HepG2 (cell line): ENCODE measurements at regions of chr17 and their contacts with region 1.

Region 1: DNA sequence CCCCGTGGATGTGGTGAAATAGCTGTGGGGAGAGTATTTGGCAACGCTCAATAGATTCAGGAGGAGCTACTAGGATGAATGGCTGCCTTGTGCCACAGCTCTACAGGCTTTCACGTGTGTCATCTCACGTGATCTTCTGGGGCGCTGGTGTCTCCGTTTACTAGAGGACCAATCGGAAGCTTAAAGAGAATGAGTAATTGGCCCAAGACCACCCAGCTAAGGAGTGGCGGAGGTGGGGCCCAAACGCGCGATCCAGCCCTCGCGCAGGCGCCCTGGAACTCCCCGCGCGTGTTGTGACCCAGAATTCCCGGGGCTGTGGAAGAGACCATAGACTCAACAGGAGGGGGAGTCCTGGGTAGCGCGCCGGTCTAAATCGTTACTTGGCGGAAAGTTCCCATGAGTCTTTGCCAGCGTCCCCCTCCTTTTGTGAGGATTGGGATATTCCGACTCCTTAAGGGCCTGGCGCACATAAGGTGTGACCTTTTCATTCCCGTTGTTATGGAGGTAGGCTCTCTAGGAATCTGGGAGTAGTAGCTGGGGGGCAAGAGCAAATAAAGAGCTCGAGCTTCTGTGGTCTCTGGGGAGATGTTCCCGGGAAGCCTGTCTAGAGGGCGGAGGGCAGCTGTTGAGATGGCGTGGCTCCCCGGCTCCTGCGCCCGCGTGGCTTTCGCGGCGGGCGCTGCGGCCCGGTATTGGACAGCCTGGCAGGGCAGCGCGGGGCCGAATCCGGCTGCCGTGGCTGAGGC is 23.4 kb downstream of the TRPV2 start:
- DNase-seq: peak; percentile 100
- ATAC-seq: peak; percentile 77
- H3K4me3 ChIP-seq: peak overlapping the region; percentile 91 to 94 (median 93)
- H3K27ac ChIP-seq: peak overlapping the region; percentile 93
- H3K4me1 ChIP-seq: peaks cover 78% of the 10 kb centered on the region
- H3K27me3 ChIP-seq: no peaks in the 10 kb centered on the region; a peak in 1 of 5 replicates
- CTCF ChIP-seq: no peak
- EP300 ChIP-seq: peak; percentile 46 to 52; a peak in 3 of 4 replicates
- POLR2A ChIP-seq: peak; percentile 93 to 99
- RAD21 ChIP-seq: no peak

Region 2: DNA sequence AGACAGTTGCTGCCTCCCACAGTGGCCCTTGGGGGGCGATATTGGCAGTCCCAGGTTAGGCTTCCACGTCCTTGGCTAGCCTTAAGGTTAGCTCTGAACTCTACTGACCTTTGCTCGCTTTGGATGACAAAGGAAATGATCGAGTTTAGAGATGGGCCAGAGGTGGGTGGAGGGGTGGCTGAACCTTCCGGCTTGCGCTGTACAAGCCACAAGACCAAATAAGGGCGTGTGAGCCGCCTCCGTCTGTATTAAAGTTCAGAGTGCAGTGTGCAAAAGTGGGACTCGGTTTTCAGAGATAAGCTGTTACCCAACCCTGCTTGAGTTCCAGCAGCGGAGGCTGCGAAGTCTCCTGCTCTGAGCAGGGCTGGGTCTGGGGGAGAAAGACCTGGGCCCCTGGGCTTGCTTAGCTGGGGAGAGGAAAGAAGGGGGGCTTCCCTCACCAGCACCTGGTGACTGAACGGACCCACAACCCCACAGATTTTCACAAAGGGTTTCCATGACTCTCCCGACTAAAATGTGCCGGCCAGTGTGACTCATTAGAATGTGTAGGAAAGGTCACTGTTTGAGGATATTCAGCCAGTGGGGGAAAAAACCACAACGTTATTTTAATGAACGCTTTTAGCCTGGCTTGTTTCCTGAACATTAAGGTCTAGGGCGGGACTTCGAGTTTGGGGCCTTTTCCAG is 152.6 kb before region 1 on chr17:
- CTCF ChIA-PET with region 1: no interaction called
- POLR2A ChIA-PET with region 1: interaction called, 17 read pairs
- in situ Hi-C with region 1: no loop called
- intact Hi-C with region 1: no loop called
- DNase-seq: peak; percentile 99
- ATAC-seq: peak; percentile 95
- H3K4me3 ChIP-seq: peak overlapping the region in 2 of 3 experiments; percentile 34 to 45; a peak in 5 of 6 replicates
- H3K27ac ChIP-seq: peak overlapping the region; percentile 95
- H3K4me1 ChIP-seq: peaks cover 79% of the 10 kb centered on the region
- H3K27me3 ChIP-seq: no peaks in the 10 kb centered on the region; a peak in 1 of 5 replicates
- CTCF ChIP-seq: peak; percentile 99
- EP300 ChIP-seq: peak; percentile 55 to 76; a peak in 3 of 4 replicates
- POLR2A ChIP-seq: peak; percentile 81 to 88
- RAD21 ChIP-seq: peak; percentile 95

Region 3: DNA sequence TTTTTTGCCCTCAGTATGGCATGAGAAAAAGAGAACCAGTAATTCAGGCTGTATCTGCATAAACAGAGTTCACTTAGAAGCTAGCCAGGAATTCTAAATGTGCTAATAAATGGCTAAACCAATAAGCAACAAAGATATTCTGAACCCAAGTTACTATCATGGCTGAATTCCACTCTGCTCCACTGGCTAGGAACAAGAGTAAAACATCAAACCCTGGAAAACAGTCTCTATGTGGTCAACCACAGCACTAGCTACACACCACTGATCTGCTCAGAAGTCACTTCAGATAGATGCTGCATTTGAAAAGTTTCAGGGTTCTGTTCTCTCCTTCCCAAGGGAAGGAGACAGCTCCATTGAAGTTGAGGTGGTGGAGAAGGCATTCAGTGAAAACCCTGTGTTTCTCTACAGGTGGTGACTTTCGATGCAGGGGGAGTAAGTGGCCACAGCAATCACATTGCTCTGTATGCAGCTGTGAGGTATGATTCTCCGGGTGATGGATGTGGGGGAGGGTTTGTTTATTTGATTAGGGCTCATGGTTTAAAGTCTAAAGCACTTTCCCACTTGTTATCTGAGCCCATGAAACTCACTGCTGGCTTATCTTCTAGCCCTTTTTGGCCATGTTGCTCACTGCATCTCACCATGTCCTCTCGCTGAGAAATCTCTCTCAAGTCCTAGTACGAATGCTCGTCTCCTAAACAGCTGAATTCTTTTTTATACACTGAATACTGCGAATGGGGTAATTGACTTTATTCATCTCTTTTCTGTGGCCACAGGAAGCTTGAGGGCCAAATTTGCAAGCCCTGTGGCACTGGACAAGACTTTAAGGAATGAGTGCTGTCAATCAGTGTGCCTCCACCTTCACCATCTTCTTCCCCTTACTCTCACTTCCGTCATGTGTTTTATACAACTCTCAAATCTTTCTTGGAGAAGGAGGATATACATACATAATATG is 125.3 kb before region 1 on chr17:
- CTCF ChIA-PET with region 1: no interaction called
- POLR2A ChIA-PET with region 1: interaction called, 11 read pairs
- in situ Hi-C with region 1: no loop called
- intact Hi-C with region 1: no loop called
- DNase-seq: peak; percentile 94
- ATAC-seq: peak; percentile 97
- H3K4me3 ChIP-seq: peak overlapping the region in 2 of 3 experiments; percentile 1 to 35; a peak in 2 of 6 replicates
- H3K27ac ChIP-seq: peak overlapping the region; percentile 97
- H3K4me1 ChIP-seq: peaks cover 55% of the 10 kb centered on the region
- H3K27me3 ChIP-seq: no peaks in the 10 kb centered on the region
- CTCF ChIP-seq: peak; percentile 11; the same call in 1 of the 2 replicates
- EP300 ChIP-seq: peak in 1 of 2 experiments; percentile 76; a peak in 3 of 4 replicates
- POLR2A ChIP-seq: peak; percentile 44 to 55; a peak in 2 of 4 replicates
- RAD21 ChIP-seq: 0 out of 2 replicates have a peak, but pooled peaks have one; percentile 41

Region 4: GRCh38 chr17:16363749-16364536 is 74.8 kb before region 1 on chr17:
- CTCF ChIA-PET with region 1: no interaction called
- POLR2A ChIA-PET with region 1: interaction called, 10 read pairs
- in situ Hi-C with region 1: no loop called
- intact Hi-C with region 1: no loop called
- DNase-seq: peak; percentile 66
- ATAC-seq: peak; percentile 93
- H3K4me3 ChIP-seq: no peak overlapping the region
- H3K27ac ChIP-seq: no peak overlapping the region
- H3K4me1 ChIP-seq: peaks cover 38% of the 10 kb centered on the region
- H3K27me3 ChIP-seq: no peaks in the 10 kb centered on the region
- CTCF ChIP-seq: peak; percentile 86
- EP300 ChIP-seq: no peak
- POLR2A ChIP-seq: no peak
- RAD21 ChIP-seq: peak; percentile 74

Region 5: GRCh38 chr17:16407911-16408588 is 30.7 kb before region 1 on chr17:
- CTCF ChIA-PET with region 1: no interaction called
- POLR2A ChIA-PET with region 1: interaction called, 12 read pairs
- in situ Hi-C with region 1: no loop called
- intact Hi-C with region 1: no loop called
- DNase-seq: peak; percentile 51
- ATAC-seq: peak; percentile 82
- H3K4me3 ChIP-seq: peak overlapping the region; percentile 19 to 58 (median 36); a peak in 5 of 6 replicates
- H3K27ac ChIP-seq: peak overlapping the region; percentile 12
- H3K4me1 ChIP-seq: peaks cover 25% of the 10 kb centered on the region
- H3K27me3 ChIP-seq: no peaks in the 10 kb centered on the region
- CTCF ChIP-seq: no peak
- EP300 ChIP-seq: no peak
- POLR2A ChIP-seq: no peak
- RAD21 ChIP-seq: no peak

Region 6: GRCh38 chr17:16428098-16428882 is 10.4 kb before region 1 on chr17:
- CTCF ChIA-PET with region 1: no interaction called
- POLR2A ChIA-PET with region 1: interaction called, 159 read pairs
- in situ Hi-C with region 1: no loop called
- intact Hi-C with region 1: no loop called
- DNase-seq: peak; percentile 64
- ATAC-seq: peak; percentile 87
- H3K4me3 ChIP-seq: no peak overlapping the region
- H3K27ac ChIP-seq: no peak overlapping the region
- H3K4me1 ChIP-seq: peaks cover 37% of the 10 kb centered on the region
- H3K27me3 ChIP-seq: no peaks in the 10 kb centered on the region
- CTCF ChIP-seq: peak; percentile 88
- EP300 ChIP-seq: no peak
- POLR2A ChIP-seq: no peak
- RAD21 ChIP-seq: peak; percentile 57; the same call in 1 of the 2 replicates

Region 7: DNA sequence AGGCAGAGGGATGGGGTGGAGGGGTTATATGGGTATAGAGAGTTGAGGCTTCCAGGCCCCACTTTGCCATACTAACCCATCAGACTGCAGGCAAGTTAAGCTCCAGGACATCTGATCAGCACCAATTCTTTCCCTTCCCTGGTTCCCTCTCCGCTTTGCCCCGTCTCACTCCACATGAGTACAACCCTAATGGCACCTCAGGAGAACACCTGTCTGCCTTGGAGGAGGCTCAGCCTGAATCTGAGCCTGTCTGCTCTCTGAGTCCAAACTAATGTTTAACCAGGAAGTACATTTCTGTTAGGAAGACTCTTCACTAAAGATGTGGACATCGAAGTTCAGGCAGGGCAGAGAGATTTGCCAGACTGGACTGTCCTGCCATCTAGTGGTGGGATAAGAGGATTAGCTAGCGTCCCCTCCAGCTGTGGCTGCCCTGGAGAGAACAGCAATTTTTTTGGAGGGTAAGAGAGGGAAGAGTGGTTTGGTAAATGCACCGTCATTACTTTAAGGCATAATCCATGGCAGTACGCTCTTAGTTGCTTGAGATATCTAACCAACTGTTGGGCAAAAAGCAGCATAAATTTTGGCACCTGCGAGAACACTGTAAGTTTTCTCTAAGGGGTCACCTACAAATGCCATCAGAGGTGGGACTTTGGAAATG is 82.5 kb after region 1 on chr17:
- CTCF ChIA-PET with region 1: no interaction called
- POLR2A ChIA-PET with region 1: interaction called, 13 read pairs
- in situ Hi-C with region 1: no loop called
- intact Hi-C with region 1: no loop called
- DNase-seq: peak; percentile 87
- ATAC-seq: peak; percentile 98
- H3K4me3 ChIP-seq: no peak overlapping the region
- H3K27ac ChIP-seq: no peak overlapping the region
- H3K4me1 ChIP-seq: peaks cover 22% of the 10 kb centered on the region
- H3K27me3 ChIP-seq: peaks cover 0 to 15% of the 10 kb centered on the region in 2 experiments; a peak in 2 of 5 replicates
- CTCF ChIP-seq: peak; percentile 97
- EP300 ChIP-seq: no peak
- POLR2A ChIP-seq: no peak
- RAD21 ChIP-seq: peak; percentile 92